ENCODE measurements at regions of chr13 and their contacts with region 1.

Region 1: GRCh38 chr13:110455941-110456340 is 105.6 kb downstream of the RAB20 start:
- DNase-seq: peak; percentile 77
- H3K4me3 Mint-ChIP-seq: peak overlapping the region; percentile 58
- H3K27ac Mint-ChIP-seq: no peak overlapping the region
- H3K4me1 Mint-ChIP-seq: peaks cover 7% of the 10 kb centered on the region
- H3K27me3 Mint-ChIP-seq: no peaks in the 10 kb centered on the region
- CTCF ChIP-seq: peak; percentile 83

Region 2: DNA sequence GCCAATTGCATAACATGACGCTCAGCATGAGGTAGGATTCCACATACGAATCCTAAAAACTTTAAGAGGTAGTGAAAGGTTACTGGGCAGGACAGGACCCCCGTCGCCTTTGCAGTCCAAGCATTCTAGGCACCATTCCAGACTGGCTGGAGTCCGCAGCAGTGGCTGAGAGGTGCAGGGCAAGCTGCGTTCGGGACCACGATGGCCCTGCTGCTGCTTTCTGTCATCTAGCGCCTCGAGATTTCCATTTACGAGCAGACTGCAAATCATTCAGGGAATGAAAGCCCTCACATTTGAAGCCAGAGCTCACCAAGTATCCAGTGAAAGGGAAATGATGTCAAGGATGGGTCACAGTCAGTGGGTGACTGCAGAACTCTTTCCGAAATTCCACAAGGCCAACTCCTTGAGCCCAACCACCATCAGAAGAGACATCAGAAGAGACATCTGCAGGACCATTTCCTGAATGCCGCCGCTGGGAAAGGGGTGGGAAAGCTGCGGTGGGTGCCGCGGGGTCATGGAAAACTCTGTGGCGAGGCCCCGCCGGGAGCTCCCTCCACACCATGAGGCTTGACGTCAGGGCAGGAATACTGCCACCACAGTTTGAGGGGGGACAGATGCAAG is 237.2 kb before region 1 on chr13:
- CTCF ChIA-PET with region 1: interaction called, 14 read pairs
- POLR2A ChIA-PET with region 1: no interaction called
- intact Hi-C with region 1: no loop called
- DNase-seq: no peak
- H3K4me3 Mint-ChIP-seq: no peak overlapping the region
- H3K27ac Mint-ChIP-seq: no peak overlapping the region
- H3K4me1 Mint-ChIP-seq: no peaks in the 10 kb centered on the region
- H3K27me3 Mint-ChIP-seq: no peaks in the 10 kb centered on the region
- CTCF ChIP-seq: no peak

Region 3: GRCh38 chr13:110421696-110422385 is 34.1 kb before region 1 on chr13:
- CTCF ChIA-PET with region 1: no interaction called
- POLR2A ChIA-PET with region 1: no interaction called
- intact Hi-C with region 1: no loop called
- DNase-seq: no peak
- H3K4me3 Mint-ChIP-seq: no peak overlapping the region
- H3K27ac Mint-ChIP-seq: peak overlapping the region; percentile 69
- H3K4me1 Mint-ChIP-seq: peaks cover 21% of the 10 kb centered on the region
- H3K27me3 Mint-ChIP-seq: no peaks in the 10 kb centered on the region
- CTCF ChIP-seq: no peak

Region 4: DNA sequence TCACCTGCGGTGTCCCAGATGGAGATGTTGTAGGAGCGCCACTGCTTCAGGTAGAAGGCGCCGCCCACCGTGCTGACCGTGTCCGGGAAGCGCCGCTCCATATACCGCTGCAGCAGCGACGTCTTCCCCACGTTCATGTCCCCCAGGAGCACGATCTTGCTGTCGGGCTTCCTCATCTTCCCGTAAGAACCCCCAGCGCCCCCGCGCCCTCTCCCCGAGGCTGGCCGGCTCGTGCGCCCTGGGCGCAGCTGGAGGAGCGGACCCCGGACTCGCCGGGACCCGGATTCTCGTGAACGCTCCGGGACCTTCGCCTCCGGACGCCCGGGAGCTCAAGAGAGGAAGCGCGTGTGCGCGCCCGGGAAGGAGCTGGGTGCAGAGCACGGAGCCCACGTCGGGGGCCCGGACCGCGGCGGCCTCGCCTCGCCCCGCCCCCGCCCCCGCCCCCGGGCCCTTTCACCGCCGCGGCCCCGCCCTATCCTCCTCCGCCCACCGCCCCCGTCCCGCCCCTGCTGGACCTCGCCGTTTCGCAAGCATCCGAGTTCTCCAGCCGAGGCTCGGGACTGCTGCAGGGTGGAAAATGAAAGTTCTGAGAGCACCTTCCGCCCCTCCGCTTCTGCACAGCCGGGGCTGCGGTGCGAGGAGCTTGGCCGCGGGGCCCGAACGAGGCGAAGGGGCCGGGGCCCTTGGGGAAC is 105.5 kb after region 1 on chr13 and contains the start of gene RAB20:
- CTCF ChIA-PET with region 1: interaction called, 7 read pairs
- POLR2A ChIA-PET with region 1: interaction called, 4 read pairs
- intact Hi-C with region 1: loop called (anchors 1 kb)
- DNase-seq: peak; percentile 87
- H3K4me3 Mint-ChIP-seq: peak within 1 kb of the TSS; percentile 88
- H3K27ac Mint-ChIP-seq: peak within 1 kb of the TSS; percentile 33
- H3K4me1 Mint-ChIP-seq: peaks cover 13% of the 10 kb centered on the region
- H3K27me3 Mint-ChIP-seq: no peaks in the 10 kb centered on the region
- CTCF ChIP-seq: no peak
- total RNA-seq, gene RAB20: 1.7 and 2.8 TPM in 2 replicates

Region 5: DNA sequence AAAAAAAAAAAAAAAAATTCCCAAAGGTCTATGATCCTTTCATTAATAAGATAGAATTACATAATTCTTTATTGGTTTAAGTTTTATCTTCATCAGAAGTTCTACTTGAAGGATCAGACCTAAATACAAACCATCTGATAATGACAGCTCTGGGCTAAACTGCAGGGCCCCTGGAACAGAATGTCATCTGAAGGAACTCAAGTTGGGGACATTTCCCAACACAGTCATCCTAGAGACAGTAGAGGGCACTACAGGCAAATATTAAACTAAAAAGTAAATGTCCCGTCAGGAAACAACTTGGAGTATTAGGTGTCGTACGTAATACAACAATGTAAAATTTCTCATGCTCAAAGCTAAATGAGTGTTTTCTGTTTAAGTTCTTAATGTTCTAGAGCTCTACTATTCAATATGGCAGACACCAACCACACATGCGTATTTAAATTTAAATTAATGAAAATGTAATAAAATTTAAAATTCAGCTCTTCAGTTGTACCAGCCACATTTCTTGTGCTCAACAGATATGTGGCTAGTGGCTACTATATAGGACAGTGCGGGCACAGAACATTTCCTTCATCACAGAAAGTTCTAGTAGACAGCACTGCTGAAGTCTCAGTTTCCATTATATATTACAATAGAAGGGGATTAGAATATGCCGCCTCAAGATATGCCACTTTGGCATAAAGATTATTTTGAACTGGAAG is 137.6 kb after region 1 on chr13:
- CTCF ChIA-PET with region 1: interaction called, 5 read pairs
- POLR2A ChIA-PET with region 1: no interaction called
- intact Hi-C with region 1: loop called (anchors 1 kb)
- DNase-seq: peak; percentile 64
- H3K4me3 Mint-ChIP-seq: no peak overlapping the region
- H3K27ac Mint-ChIP-seq: no peak overlapping the region
- H3K4me1 Mint-ChIP-seq: peaks cover 10% of the 10 kb centered on the region
- H3K27me3 Mint-ChIP-seq: no peaks in the 10 kb centered on the region
- CTCF ChIP-seq: peak; percentile 55

Region 6: DNA sequence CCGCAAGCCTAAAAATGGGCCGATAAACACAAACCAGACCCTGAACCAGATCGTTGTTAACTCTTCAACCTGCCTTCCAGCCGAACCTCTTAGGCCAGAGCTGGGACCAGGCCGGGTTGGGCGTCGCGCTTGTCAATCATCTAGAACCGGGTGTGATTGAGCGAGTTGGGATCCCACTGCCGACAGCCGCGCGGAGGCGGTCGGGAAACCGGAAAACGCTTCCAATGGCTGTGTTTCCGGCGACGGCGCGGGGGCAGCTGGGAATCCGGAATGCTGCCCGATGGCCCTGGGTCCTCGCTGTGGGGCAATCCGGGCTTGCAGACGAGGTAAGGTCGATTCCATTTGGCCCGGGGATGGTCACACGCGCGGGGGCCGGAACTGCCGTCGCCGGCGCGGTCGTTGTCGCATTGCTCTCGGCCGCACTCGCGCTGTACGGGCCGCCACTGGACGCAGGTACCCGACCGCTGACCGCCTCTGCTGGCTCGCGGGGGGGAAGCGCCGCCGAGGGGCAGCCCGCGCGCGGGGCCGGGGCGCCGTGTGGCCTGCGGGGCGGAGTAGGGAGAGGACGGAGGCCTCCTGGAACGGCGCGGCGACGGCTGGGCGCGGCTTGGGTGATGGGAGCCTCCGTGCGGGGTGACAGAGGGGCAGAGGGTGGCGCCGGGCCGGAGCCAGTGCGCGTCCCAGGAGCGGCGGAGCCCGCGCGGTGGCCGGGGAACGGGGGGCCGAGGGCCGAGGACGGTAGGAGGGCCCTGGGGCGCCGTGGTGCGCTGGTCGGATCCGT is 159.6 kb after region 1 on chr13 and contains the start of gene NAXD:
- CTCF ChIA-PET with region 1: interaction called, 13 read pairs
- POLR2A ChIA-PET with region 1: interaction called, 6 read pairs
- intact Hi-C with region 1: loop called (anchors 2 kb)
- DNase-seq: peak; percentile 96
- H3K4me3 Mint-ChIP-seq: peak within 1 kb of the TSS; percentile 82
- H3K27ac Mint-ChIP-seq: peak within 1 kb of the TSS; percentile 94
- H3K4me1 Mint-ChIP-seq: peaks cover 18% of the 10 kb centered on the region
- H3K27me3 Mint-ChIP-seq: no peaks in the 10 kb centered on the region
- CTCF ChIP-seq: no peak
- total RNA-seq, gene NAXD: 27.7 and 28.3 TPM in 2 replicates

Region 7: DNA sequence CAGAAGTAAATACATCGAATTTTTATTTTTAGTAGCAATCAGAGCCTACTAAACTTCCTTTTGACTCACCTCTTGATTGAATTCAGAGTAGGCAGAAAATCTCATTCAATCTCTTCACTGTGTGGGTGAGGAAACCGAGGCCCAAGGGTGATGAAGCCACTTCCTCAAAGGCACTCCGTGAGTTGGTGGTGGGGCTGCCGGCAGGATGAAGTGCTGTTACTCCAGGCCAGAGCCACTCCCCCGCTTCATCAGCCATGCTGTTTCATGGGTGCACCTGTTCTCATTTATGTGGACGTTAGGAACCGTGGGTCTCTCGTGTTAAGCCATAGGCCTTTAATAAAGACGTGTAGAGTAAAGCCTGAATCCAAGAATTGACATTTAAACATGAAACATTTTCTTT is 270.8 kb after region 1 on chr13:
- CTCF ChIA-PET with region 1: no interaction called
- POLR2A ChIA-PET with region 1: no interaction called
- intact Hi-C with region 1: no loop called
- DNase-seq: no peak
- H3K4me3 Mint-ChIP-seq: no peak overlapping the region
- H3K27ac Mint-ChIP-seq: no peak overlapping the region
- H3K4me1 Mint-ChIP-seq: no peaks in the 10 kb centered on the region
- H3K27me3 Mint-ChIP-seq: no peaks in the 10 kb centered on the region
- CTCF ChIP-seq: no peak

Region 8: DNA sequence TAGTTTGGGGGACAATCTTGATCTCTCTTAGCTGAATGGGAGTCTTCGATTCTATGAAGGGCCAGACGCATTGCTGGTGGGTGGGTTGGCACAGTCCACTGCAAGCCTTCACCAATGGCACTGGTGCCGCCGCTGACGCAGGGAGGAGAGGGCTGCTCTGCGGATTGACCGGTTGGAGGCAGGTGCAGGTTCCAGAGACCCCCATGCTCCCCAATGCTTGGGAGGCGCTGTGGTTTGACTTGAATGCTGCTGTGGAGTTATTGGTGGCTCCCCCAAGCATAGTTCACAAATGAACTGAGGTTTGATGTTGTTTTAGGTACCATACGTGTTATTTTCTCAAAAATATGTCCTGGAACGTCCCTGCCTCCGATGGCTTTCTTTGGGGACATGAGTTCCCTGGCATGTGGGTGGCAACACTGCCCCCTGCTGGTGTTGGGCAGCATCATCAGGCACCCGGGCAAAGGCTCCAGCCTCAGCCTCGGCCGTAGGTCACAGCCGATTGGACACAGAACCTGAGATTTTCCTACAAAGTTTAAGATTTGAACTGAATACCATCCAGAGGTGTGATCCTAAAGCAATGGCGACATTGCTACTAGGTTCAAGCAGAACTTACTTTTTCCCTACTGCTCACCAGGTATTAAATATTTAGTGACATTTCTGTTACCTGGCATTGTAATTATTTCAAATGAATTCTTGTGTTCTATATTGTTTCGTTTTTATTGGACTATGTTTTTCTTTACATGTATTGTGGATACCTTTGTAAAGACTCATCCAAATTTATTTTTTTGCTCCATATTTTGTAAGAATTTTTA is 363.5 kb after region 1 on chr13:
- CTCF ChIA-PET with region 1: interaction called, 11 read pairs
- POLR2A ChIA-PET with region 1: no interaction called
- intact Hi-C with region 1: loop called (anchors 2 kb)
- DNase-seq: peak; percentile 78
- H3K4me3 Mint-ChIP-seq: no peak overlapping the region
- H3K27ac Mint-ChIP-seq: no peak overlapping the region
- H3K4me1 Mint-ChIP-seq: peaks cover 5% of the 10 kb centered on the region
- H3K27me3 Mint-ChIP-seq: no peaks in the 10 kb centered on the region
- CTCF ChIP-seq: peak; percentile 92

Measured in MCF 10A (cell line).